ENCODE measurements at regions of chr4 and their contacts with region 1.

Region 1: GRCh38 chr4:3480528-3481112 is 17.5 kb downstream of the DOK7 start:
- DNase-seq: peak; percentile 77
- H3K4me3 Mint-ChIP-seq: no peak overlapping the region
- H3K27ac Mint-ChIP-seq: no peak overlapping the region
- H3K4me1 Mint-ChIP-seq: no peaks in the 10 kb centered on the region
- H3K27me3 Mint-ChIP-seq: peaks cover 10% of the 10 kb centered on the region

Region 2: GRCh38 chr4:3346146-3346545 is 134.5 kb before region 1 on chr4:
- CTCF ChIA-PET with region 1: interaction called, 10 read pairs
- POLR2A ChIA-PET with region 1: no interaction called
- DNase-seq: no peak
- H3K4me3 Mint-ChIP-seq: no peak overlapping the region
- H3K27ac Mint-ChIP-seq: no peak overlapping the region
- H3K4me1 Mint-ChIP-seq: peaks cover 6% of the 10 kb centered on the region
- H3K27me3 Mint-ChIP-seq: no peaks in the 10 kb centered on the region

Measured in activated CD4-positive, alpha-beta memory T cell treated with anti-CD3 and anti-CD28 coated beads, Interleukin-2, amount 10 ng/mL, durations not matched to agents 7 days and 5 days (primary cell).